Dorsolateral prefrontal cortex (tissue), 120 donors: ENCODE measurements at regions of chr10 and their contacts with region 1.

Region 1: GRCh38 chr10:61719906-61720305 is 57.2 kb downstream of the CABCOCO1 start:
- DNase-seq: no peak
- H3K4me3 ChIP-seq: no peak overlapping the region
- H3K27ac ChIP-seq: no peak overlapping the region
- H3K27me3 ChIP-seq: no peaks in the 10 kb centered on the region
- CTCF ChIP-seq: no peak

Region 2: GRCh38 chr10:61682323-61682722 is 37.6 kb before region 1 on chr10:
- intact Hi-C with region 1: loop called in 1 of 2 experiments (anchors 5 kb)
- DNase-seq: no peak
- H3K4me3 ChIP-seq: no peak overlapping the region
- H3K27ac ChIP-seq: no peak overlapping the region
- H3K27me3 ChIP-seq: no peaks in the 10 kb centered on the region
- CTCF ChIP-seq: no peak

Region 3: GRCh38 chr10:62106929-62107532 is 387.1 kb after region 1 on chr10:
- intact Hi-C with region 1: no loop called
- DNase-seq: no peak
- H3K4me3 ChIP-seq: no peak overlapping the region
- H3K27ac ChIP-seq: no peak overlapping the region
- H3K27me3 ChIP-seq: no peaks in the 10 kb centered on the region
- CTCF ChIP-seq: no peak